Activated CD8-positive, alpha-beta T cell treated with anti-CD3 and anti-CD28 coated beads for 36 hours (primary cell): ENCODE measurements at regions of chr16 and their contacts with region 1.

Region 1: GRCh38 chr16:87806603-87807546 is 41.1 kb upstream of the KLHDC4 start:
- DNase-seq: peak; percentile 81
- ATAC-seq: peak; percentile 81
- H3K4me3 Mint-ChIP-seq: peak overlapping the region; percentile 87
- H3K27ac Mint-ChIP-seq: peak overlapping the region; percentile 95
- H3K4me1 Mint-ChIP-seq: peaks cover 32% of the 10 kb centered on the region
- H3K27me3 Mint-ChIP-seq: no peaks in the 10 kb centered on the region
- CTCF ChIP-seq: no peak

Region 2: DNA sequence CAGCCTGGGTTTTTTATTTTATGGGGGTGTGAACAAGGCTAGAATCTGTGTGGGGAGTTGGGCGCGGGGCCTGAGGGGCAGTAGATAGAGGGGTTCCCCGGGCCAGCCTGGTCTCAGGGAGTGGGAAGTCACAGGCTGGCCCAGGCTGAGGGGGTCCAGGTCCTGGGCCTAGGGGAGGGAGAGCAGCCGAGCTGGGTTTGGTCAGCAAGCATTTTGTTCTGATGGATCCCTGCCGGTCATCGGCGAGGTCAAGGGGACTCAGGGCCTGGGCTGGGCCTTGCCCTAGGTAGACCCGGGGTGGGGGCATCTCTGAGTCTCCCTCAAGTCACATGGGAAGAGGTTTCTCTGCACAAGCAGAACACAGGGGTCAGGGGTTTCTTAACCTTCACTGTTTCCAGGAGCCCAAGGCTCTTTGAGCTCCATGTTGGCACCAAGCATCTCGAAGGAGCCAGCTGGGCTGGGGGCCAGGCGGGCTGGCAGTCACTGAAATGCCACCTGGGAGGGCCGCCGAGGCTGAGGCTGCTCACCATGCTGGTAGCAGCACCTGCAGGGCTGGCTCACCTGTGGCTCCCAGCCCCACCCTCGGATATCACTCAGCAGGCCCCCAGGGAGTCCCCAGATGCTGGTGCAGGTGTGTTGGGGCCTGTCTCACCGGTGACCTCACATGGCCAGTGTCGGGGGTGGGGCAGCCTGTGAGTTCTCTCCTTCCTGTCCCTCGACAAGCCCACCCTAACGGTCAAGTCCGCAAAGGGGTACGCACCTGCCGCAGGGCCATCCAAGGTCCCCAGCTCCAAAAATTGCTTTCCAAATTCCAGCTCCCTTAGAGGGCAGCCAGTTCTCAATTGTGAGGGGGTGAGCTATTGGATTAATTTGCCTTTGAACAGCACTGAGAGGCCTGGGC is 21.4 kb after region 1 on chr16:
- CTCF ChIA-PET with region 1: no interaction called
- POLR2A ChIA-PET with region 1: interaction called, 15 read pairs
- intact Hi-C with region 1: no loop called
- DNase-seq: peak; percentile 48
- ATAC-seq: peak; percentile 11
- H3K4me3 Mint-ChIP-seq: no peak overlapping the region
- H3K27ac Mint-ChIP-seq: peak overlapping the region; percentile 67
- H3K4me1 Mint-ChIP-seq: peaks cover 2% of the 10 kb centered on the region
- H3K27me3 Mint-ChIP-seq: no peaks in the 10 kb centered on the region
- CTCF ChIP-seq: no peak